Activated B cell treated with CpG ODN at 0.5 μM for 24 hours (primary cell): ENCODE measurements at regions of chr16 and their contacts with region 1.

Region 1: GRCh38 chr16:15888072-15888976 is at the start of gene CEP20:
- DNase-seq: peak; percentile 98
- ATAC-seq: peak; percentile 99
- H3K4me3 Mint-ChIP-seq: peak within 1 kb of the TSS; percentile 99
- H3K27ac Mint-ChIP-seq: peak within 1 kb of the TSS; percentile 99
- H3K4me1 Mint-ChIP-seq: peaks cover 30% of the 10 kb centered on the region
- H3K27me3 Mint-ChIP-seq: no peaks in the 10 kb centered on the region
- CTCF ChIP-seq: no peak
- total RNA-seq, gene CEP20: 32.2 and 36.4 TPM in 2 replicates

Region 2: GRCh38 chr16:15643048-15643945 is 245.0 kb before region 1 on chr16 and contains the start of gene MARF1:
- CTCF ChIA-PET with region 1: no interaction called
- POLR2A ChIA-PET with region 1: interaction called, 5 read pairs
- intact Hi-C with region 1: loop called (anchors 10 kb)
- DNase-seq: peak; percentile 100
- ATAC-seq: peak; percentile 73
- H3K4me3 Mint-ChIP-seq: peak within 1 kb of the TSS; percentile 84
- H3K27ac Mint-ChIP-seq: peak within 1 kb of the TSS; percentile 98
- H3K4me1 Mint-ChIP-seq: peaks cover 75% of the 10 kb centered on the region
- H3K27me3 Mint-ChIP-seq: no peaks in the 10 kb centered on the region
- CTCF ChIP-seq: no peak
- total RNA-seq, gene MARF1: 160 and 186 TPM in 2 replicates

Region 3: DNA sequence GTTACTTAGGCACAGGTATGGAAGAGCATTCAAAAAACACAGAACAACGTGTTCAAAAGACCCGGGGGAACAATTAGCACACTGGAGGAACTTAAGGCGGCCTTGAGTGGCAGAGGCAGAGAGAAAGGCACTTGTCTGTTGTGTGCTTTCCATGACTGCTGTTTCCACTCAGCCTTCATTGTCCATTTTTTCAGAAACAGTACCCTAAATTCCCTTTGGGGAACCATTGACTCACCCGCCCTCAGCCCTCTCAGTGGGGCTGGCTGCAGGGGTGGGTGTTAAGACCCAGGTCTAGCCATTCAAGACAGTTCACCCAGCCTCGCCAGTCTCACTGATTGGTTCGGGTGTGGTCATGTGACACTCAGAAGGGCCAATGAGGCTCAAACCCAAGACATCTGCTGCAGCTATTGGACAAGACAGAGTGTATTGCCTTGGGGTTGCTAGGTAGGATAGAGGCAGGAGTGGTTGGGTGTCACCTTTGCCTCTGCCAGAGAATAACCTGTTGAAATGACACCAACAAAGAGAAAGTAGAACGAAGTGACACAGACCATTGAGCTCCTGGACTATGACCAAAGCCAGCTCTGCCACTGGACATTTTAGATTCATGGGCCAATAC is 19.6 kb after region 1 on chr16:
- CTCF ChIA-PET with region 1: interaction called, 5 read pairs
- POLR2A ChIA-PET with region 1: interaction called, 5 read pairs
- intact Hi-C with region 1: loop called (anchors 1 kb)
- DNase-seq: peak; percentile 25
- ATAC-seq: peak; percentile 100
- H3K4me3 Mint-ChIP-seq: peak overlapping the region; percentile 0
- H3K27ac Mint-ChIP-seq: peak overlapping the region; percentile 38
- H3K4me1 Mint-ChIP-seq: peaks cover 9% of the 10 kb centered on the region
- H3K27me3 Mint-ChIP-seq: no peaks in the 10 kb centered on the region
- CTCF ChIP-seq: no peak

Region 4: GRCh38 chr16:15949210-15950160 is 61.2 kb after region 1 on chr16 and contains the start of gene ABCC1:
- CTCF ChIA-PET with region 1: interaction called, 3 read pairs
- POLR2A ChIA-PET with region 1: interaction called, 25 read pairs
- intact Hi-C with region 1: loop called (anchors 1 kb)
- DNase-seq: peak; percentile 53
- ATAC-seq: peak; percentile 80
- H3K4me3 Mint-ChIP-seq: peak within 1 kb of the TSS; percentile 93
- H3K27ac Mint-ChIP-seq: peak within 1 kb of the TSS; percentile 91
- H3K4me1 Mint-ChIP-seq: peaks cover 40% of the 10 kb centered on the region
- H3K27me3 Mint-ChIP-seq: no peaks in the 10 kb centered on the region
- CTCF ChIP-seq: no peak
- total RNA-seq, gene ABCC1: 46.5 and 49.8 TPM in 2 replicates

Region 5: DNA sequence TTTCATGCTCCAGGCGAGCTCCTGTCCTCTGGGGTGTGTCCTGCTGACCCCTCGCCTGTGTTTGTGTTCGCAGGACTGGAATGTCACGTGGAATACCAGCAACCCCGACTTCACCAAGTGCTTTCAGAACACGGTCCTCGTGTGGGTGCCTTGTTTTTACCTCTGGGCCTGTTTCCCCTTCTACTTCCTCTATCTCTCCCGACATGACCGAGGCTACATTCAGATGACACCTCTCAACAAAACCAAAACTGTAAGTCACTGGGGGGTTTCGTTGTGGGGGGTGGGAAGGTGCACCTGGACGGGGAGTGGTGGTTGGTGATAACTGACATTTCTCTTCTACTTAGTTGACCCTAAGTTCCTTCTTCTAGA is 119.4 kb after region 1 on chr16:
- CTCF ChIA-PET with region 1: no interaction called
- POLR2A ChIA-PET with region 1: interaction called, 37 read pairs
- intact Hi-C with region 1: loop called (anchors 1 kb)
- DNase-seq: peak; percentile 42
- ATAC-seq: peak; percentile 82
- H3K4me3 Mint-ChIP-seq: peak overlapping the region; percentile 73
- H3K27ac Mint-ChIP-seq: peak overlapping the region; percentile 99
- H3K4me1 Mint-ChIP-seq: peaks cover 45% of the 10 kb centered on the region
- H3K27me3 Mint-ChIP-seq: no peaks in the 10 kb centered on the region
- CTCF ChIP-seq: no peak

Region 6: GRCh38 chr16:16033208-16033717 is 144.9 kb after region 1 on chr16:
- CTCF ChIA-PET with region 1: interaction called, 3 read pairs
- POLR2A ChIA-PET with region 1: interaction called, 11 read pairs
- intact Hi-C with region 1: loop called (anchors 5 kb)
- DNase-seq: no peak
- ATAC-seq: peak; percentile 47
- H3K4me3 Mint-ChIP-seq: no peak overlapping the region
- H3K27ac Mint-ChIP-seq: peak overlapping the region; percentile 66
- H3K4me1 Mint-ChIP-seq: peaks cover 16% of the 10 kb centered on the region
- H3K27me3 Mint-ChIP-seq: no peaks in the 10 kb centered on the region
- CTCF ChIP-seq: no peak